ENCODE measurements at regions of chr21 and their contacts with region 1.

Region 1: DNA sequence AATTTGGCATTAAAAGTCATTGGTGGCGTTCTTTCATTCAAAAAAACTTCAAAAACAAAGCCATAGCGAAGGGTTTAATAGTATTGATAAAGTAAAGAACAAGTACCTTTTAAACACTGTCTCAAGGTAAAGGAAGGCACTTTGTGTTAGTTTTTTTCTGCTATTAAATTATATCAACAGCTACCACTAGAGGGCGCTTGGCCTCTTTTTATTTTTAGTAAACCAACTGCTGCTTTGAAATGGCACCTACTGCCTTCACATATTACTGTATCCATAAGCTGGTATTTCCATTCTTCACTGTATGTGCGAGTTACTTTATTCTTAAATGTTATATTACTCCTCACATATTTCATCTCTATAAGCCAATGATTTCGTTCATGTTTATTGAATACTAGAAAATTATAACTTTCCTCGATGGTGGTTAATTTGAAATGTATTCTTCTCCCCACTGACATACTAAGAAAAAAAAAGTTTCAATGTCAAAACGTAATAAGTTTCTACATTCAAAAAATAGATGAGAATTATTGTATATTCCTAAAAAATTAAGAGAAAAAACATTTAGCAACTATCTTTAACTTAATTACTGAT is 125.7 kb upstream of the CXADR start:
- DNase-seq: peak; percentile 47
- H3K4me3 Mint-ChIP-seq: no peak overlapping the region
- H3K27ac Mint-ChIP-seq: no peak overlapping the region
- H3K4me1 Mint-ChIP-seq: no peaks in the 10 kb centered on the region
- H3K27me3 Mint-ChIP-seq: no peaks in the 10 kb centered on the region
- CTCF ChIP-seq: peak; percentile 33

Region 2: GRCh38 chr21:17512253-17513213 is 125.4 kb after region 1 on chr21 and contains the start of gene CXADR:
- CTCF ChIA-PET with region 1: interaction called, 6 read pairs
- intact Hi-C with region 1: loop called (anchors 2 kb)
- DNase-seq: peak; percentile 93
- H3K4me3 Mint-ChIP-seq: peak within 1 kb of the TSS; percentile 88
- H3K27ac Mint-ChIP-seq: peak within 1 kb of the TSS; percentile 84
- H3K4me1 Mint-ChIP-seq: peaks cover 19% of the 10 kb centered on the region
- H3K27me3 Mint-ChIP-seq: no peaks in the 10 kb centered on the region
- CTCF ChIP-seq: peak; percentile 71
- total RNA-seq, gene CXADR: 51.7 and 55.1 TPM in 2 replicates

Region 3: GRCh38 chr21:17554679-17555465 is 167.7 kb after region 1 on chr21:
- CTCF ChIA-PET with region 1: interaction called, 25 read pairs
- intact Hi-C with region 1: no loop called
- DNase-seq: no peak
- H3K4me3 Mint-ChIP-seq: no peak overlapping the region
- H3K27ac Mint-ChIP-seq: no peak overlapping the region
- H3K4me1 Mint-ChIP-seq: peaks cover 27% of the 10 kb centered on the region
- H3K27me3 Mint-ChIP-seq: no peaks in the 10 kb centered on the region
- CTCF ChIP-seq: no peak

Region 4: GRCh38 chr21:17560377-17561025 is 173.4 kb after region 1 on chr21:
- CTCF ChIA-PET with region 1: interaction called, 4 read pairs
- intact Hi-C with region 1: loop called (anchors 5 kb)
- DNase-seq: no peak
- H3K4me3 Mint-ChIP-seq: no peak overlapping the region
- H3K27ac Mint-ChIP-seq: no peak overlapping the region
- H3K4me1 Mint-ChIP-seq: peaks cover 11% of the 10 kb centered on the region
- H3K27me3 Mint-ChIP-seq: no peaks in the 10 kb centered on the region
- CTCF ChIP-seq: no peak

Region 5: GRCh38 chr21:17585875-17586450 is 198.8 kb after region 1 on chr21:
- CTCF ChIA-PET with region 1: interaction called, 11 read pairs
- intact Hi-C with region 1: loop called (anchors 1 kb)
- DNase-seq: peak; percentile 22
- H3K4me3 Mint-ChIP-seq: no peak overlapping the region
- H3K27ac Mint-ChIP-seq: no peak overlapping the region
- H3K4me1 Mint-ChIP-seq: no peaks in the 10 kb centered on the region
- H3K27me3 Mint-ChIP-seq: no peaks in the 10 kb centered on the region
- CTCF ChIP-seq: peak; percentile 17